ENCODE measurements at regions of chrX and their contacts with region 1.

Region 1: GRCh38 chrX:43654431-43655150 is 1.5 kb upstream of the MAOA start:
- DNase-seq: peak; percentile 96
- H3K4me3 ChIP-seq: peak overlapping the region; percentile 70 to 88 (median 72)
- H3K27ac ChIP-seq: peak overlapping the region; percentile 82 to 95 (median 94)
- H3K4me1 ChIP-seq: peaks cover 0 to 5% (median 2%) of the 10 kb centered on the region in 4 donors
- H3K27me3 ChIP-seq: no peaks in the 10 kb centered on the region
- CTCF ChIP-seq: peak; percentile 18 to 43 (median 18)
- EP300 ChIP-seq: no peak
- POLR2A ChIP-seq: peak; percentile 69

Region 2: GRCh38 chrX:43313035-43313434 is 341.6 kb before region 1 on chrX:
- intact Hi-C with region 1: no loop called
- DNase-seq: no peak
- H3K4me3 ChIP-seq: no peak overlapping the region
- H3K27ac ChIP-seq: no peak overlapping the region
- H3K4me1 ChIP-seq: no peaks in the 10 kb centered on the region
- H3K27me3 ChIP-seq: no peaks in the 10 kb centered on the region
- CTCF ChIP-seq: no peak
- EP300 ChIP-seq: no peak
- POLR2A ChIP-seq: no peak

Region 3: DNA sequence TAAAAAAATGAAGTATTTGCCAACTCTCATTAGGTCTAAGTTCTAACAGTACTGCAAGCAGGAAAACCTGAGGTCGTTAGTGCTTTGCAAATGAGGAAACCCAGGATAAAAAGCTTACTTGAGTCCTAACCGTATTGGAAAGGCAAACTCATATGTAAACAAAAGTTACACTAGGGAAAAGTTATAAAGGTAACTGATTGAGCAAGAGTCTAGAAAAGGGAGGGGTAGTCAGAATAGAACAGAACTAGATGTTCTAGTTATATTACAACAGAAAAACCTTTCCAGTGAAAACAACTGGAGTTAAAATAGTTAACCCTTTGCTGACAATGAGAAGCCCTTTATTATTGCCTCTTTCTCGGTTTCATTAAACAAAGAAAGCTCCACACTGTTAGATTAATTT is 64.9 kb before region 1 on chrX:
- intact Hi-C with region 1: loop called (anchors 5 kb)
- DNase-seq: no peak
- H3K4me3 ChIP-seq: no peak overlapping the region
- H3K27ac ChIP-seq: peak overlapping the region; percentile 69 to 82 (median 78)
- H3K4me1 ChIP-seq: peaks cover 4 to 45% (median 18%) of the 10 kb centered on the region in 4 donors
- H3K27me3 ChIP-seq: no peaks in the 10 kb centered on the region
- CTCF ChIP-seq: no peak
- EP300 ChIP-seq: no peak
- POLR2A ChIP-seq: no peak

Region 4: DNA sequence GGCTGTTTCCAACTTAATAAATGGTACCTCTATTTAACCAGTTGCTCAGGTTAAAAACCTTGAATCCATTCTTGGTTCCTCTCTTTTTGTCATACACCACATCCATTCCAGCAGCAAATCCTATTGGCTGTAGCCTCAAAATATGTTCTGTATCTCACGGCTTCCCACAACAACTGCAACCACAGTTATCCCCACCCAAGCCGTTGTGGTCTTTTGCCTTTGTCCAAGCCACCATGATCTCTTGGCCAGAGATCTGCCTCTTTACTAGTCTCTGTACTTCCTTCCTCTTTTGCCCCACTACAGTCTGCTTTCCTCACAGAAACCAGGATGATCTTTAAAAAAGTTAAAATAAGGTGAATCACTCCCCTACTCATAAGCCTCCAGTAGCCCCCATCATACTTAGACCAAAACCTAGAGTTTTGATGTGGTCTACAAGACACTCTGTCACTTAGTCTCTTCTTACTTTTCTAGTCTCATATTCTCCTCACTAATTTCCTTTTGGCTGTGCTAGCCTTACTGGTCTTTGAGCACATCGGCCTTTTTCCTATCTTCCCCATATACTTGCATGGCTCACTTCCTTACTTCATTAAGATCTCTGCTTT is 11.8 kb after region 1 on chrX:
- intact Hi-C with region 1: no loop called
- DNase-seq: no peak
- H3K4me3 ChIP-seq: no peak overlapping the region
- H3K27ac ChIP-seq: no peak overlapping the region
- H3K4me1 ChIP-seq: peaks cover 0 to 46% (median 21%) of the 10 kb centered on the region in 4 donors
- H3K27me3 ChIP-seq: no peaks in the 10 kb centered on the region
- CTCF ChIP-seq: no peak
- EP300 ChIP-seq: no peak
- POLR2A ChIP-seq: no peak

Region 5: DNA sequence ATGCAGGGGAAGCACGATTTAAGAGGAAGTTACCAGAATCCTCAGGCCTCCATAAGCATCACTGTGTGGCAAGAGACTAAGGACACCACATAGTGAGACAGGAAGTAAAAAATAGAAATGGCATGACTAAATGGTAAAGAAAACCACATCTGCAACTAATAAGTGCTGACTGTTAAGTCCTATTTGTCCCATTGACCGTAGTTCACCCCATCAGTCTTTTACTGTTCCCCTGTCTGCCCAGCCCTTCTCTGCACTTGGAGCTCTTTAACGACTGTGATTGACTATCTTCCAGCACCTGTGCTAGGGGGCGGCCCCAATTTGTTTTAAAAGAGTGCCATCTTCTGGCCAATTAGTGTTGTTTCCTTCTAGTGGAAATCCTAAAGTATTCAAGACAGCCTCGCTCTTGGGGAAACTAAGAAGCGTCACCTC is 95.7 kb after region 1 on chrX:
- intact Hi-C with region 1: loop called (anchors 5 kb)
- DNase-seq: no peak
- H3K4me3 ChIP-seq: no peak overlapping the region
- H3K27ac ChIP-seq: no peak overlapping the region
- H3K4me1 ChIP-seq: peaks cover 0 to 11% (median 3%) of the 10 kb centered on the region in 4 donors
- H3K27me3 ChIP-seq: no peaks in the 10 kb centered on the region
- CTCF ChIP-seq: peak; percentile 51 to 66 (median 54)
- EP300 ChIP-seq: no peak
- POLR2A ChIP-seq: no peak